Heart right ventricle (tissue), 16 donors: ENCODE measurements at regions of chr1 and their contacts with region 1.

Region 1: GRCh38 chr1:33367485-33368405 is 46.8 kb upstream of the A3GALT2 start:
- DNase-seq: peak; percentile 88 to 90
- ATAC-seq: peak; percentile 65 to 81 (median 74)
- H3K4me3 ChIP-seq: no peak overlapping the region
- H3K27ac ChIP-seq: peak overlapping the region in 9 of 10 donors; percentile 48 to 88 (median 80)
- H3K4me1 ChIP-seq: peaks cover 35 to 73% (median 54%) of the 10 kb centered on the region in 9 donors
- H3K27me3 ChIP-seq: no peaks in the 10 kb centered on the region
- CTCF ChIP-seq: peak; percentile 96 to 99 (median 97)

Region 2: DNA sequence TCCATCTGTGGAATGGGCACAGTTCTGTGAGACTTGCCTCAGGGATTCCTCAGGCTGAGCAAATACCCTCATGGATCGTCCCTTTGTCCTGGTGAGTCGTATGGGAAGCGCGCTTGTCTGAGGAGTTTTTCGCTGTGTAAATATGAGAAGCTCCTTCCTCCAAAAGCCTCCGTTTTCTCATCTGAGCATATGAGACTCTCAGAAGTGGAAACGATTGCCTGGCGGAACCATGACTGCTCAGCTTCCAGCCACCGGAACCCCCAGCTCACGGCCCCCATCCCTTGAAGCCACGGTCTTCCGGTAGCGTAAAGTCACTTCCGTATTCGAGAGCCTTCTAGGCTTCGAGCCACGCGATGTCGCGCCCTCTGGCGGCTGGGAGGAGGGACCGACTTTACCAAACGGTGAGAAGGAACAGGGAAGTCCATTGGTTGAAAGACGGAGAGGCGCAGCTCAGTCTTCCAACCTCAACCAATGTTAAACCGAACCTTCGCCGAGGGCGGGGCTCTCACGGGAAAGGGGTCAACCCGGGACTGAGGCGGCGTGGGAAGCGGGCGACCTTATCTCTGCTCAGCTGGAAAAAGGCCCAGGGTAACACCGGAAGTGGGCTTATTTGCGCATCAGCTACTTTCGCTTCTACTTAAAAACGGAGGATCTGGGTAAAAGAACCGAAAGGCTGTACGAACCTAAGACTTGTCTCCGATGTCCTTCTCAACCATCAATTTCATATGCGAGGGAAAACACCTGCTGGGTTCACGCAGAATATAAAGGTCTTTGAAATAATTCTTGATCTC is 240.5 kb before region 1 on chr1:
- intact Hi-C with region 1: loop called in 5 of 10 experiments (anchors 10 kb)
- DNase-seq: peak; percentile 98 to 99
- ATAC-seq: peak; percentile 98 to 99 (median 99)
- H3K4me3 ChIP-seq: peak overlapping the region; percentile 41 to 88 (median 74)
- H3K27ac ChIP-seq: peak overlapping the region; percentile 59 to 93 (median 86)
- H3K4me1 ChIP-seq: peaks cover 0 to 28% (median 22%) of the 10 kb centered on the region in 9 donors
- H3K27me3 ChIP-seq: no peaks in the 10 kb centered on the region
- CTCF ChIP-seq: peak; percentile 77 to 98 (median 96)

Region 3: DNA sequence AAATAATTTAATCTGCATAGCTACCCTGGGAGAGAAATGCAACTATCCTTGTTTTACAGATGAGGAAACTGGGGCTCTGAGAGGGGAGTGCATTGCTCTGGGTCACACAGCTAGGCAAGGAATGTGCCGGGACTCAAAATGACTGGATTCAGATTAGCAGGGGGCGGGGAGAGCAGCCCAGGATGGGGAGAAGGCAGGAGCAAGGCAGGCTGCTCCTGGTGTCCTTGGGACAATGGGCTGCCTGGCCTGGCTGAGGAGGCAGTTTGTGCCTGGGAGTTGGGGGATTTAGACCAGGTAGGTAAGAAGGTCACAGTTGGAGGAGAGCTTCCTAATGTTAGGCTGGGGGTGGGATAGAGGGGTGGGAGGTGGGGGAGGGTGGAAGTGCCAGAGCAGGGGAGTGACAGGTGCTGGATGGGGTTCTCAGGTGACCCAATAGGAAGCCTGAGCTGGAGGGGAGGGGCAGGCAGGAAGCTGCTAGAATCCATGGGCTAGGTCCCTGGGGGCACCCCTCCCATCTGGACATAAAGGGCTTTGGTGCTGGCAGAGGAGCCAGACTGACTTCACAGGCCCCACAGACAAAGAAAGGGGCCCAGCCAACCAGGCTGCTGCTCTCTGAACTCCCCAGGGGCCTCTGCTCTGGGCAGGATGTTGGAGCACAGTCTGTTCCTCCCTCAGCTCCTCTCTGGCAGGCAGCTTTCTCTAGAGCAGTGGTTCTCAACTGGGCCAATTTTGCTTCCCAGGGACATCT is 214.9 kb before region 1 on chr1:
- intact Hi-C with region 1: no loop called
- DNase-seq: peak; percentile 87 to 91
- ATAC-seq: peak; percentile 89 to 97 (median 96)
- H3K4me3 ChIP-seq: no peak overlapping the region
- H3K27ac ChIP-seq: peak overlapping the region in 9 of 10 donors; percentile 50 to 84 (median 75)
- H3K4me1 ChIP-seq: peaks cover 13 to 58% (median 51%) of the 10 kb centered on the region in 9 donors
- H3K27me3 ChIP-seq: no peaks in the 10 kb centered on the region
- CTCF ChIP-seq: no peak

Region 4: DNA sequence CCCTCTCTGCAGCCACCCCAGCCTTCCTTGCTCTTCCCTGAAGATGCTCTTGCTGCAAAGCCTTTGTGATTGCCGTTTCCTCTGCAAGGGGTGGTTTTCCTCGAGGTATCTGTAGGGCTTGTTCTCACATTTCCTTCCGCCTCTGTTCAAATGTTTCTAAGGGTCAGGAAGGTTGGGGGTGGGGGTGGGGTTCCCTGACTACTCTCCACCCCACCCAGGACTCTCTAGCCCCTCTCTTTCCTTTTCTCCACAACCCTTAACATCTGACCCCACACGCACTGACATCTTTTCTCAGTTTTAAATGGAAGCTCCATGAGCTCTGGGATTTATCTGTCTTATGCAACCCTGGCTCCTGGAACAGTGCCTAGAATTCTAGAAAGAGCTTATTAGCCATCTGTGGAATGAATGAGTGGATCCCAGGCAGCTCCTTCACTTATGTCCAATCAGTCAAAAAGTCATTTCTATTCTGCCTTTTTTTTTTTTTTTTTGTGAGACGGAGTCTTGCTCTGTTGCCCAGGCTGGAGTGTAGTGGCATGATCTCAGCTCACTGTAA is 138.7 kb before region 1 on chr1:
- intact Hi-C with region 1: loop called in 3 of 10 experiments (anchors 5 to 10 kb)
- DNase-seq: peak in 1 of 2 donors; percentile 80
- ATAC-seq: peak; percentile 73 to 94 (median 90)
- H3K4me3 ChIP-seq: no peak overlapping the region
- H3K27ac ChIP-seq: peak overlapping the region in 5 of 10 donors; percentile 16 to 69 (median 24)
- H3K4me1 ChIP-seq: peaks cover 0 to 33% (median 6%) of the 10 kb centered on the region in 9 donors
- H3K27me3 ChIP-seq: no peaks in the 10 kb centered on the region
- CTCF ChIP-seq: no peak

Region 5: DNA sequence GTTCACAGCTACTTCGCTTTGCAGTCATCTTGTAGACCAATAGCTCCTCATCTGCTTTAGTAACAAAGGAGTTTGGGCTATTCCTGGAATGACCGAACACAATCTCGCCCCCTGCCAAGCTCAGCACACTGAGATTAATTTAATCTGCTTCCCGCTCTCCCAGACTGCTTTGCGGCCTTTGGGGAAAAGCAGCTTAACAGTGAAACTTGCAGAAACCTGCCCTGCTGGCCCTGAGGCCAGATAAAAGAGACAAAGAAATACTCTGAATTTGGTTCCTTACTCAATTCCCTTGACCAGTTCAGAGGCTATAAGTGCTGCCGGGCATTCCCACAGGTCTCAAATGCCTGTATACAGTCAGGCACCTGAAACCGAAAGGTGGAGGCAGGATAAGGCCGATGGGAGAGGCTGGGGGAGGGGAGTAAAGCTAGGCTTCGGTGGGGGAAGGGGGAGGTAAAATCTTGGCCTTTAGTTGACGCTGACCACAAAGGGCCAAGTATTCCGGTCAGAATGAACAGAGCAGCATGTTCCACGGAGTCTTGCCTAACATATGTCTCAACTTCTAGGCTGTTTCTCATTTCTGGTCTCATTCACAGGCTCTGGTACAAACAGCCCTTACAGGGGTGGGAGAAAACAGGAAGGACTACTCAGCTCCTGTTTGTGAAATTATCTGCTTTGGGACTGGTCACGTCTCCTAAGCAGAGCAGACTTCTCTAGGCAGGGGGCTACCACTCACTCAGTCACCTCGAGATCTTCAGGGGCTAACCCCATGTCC is 29.1 kb before region 1 on chr1:
- intact Hi-C with region 1: loop called in 2 of 10 experiments (anchors 5 kb)
- DNase-seq: peak in 1 of 2 donors; percentile 72
- ATAC-seq: peak; percentile 37 to 76 (median 62)
- H3K4me3 ChIP-seq: peak overlapping the region in 7 of 10 donors; percentile 0 to 30 (median 15)
- H3K27ac ChIP-seq: peak overlapping the region; percentile 46 to 100 (median 92)
- H3K4me1 ChIP-seq: peaks cover 65 to 100% (median 99%) of the 10 kb centered on the region in 9 donors
- H3K27me3 ChIP-seq: no peaks in the 10 kb centered on the region
- CTCF ChIP-seq: peak in 1 of 9 donors; percentile 12

Region 6: DNA sequence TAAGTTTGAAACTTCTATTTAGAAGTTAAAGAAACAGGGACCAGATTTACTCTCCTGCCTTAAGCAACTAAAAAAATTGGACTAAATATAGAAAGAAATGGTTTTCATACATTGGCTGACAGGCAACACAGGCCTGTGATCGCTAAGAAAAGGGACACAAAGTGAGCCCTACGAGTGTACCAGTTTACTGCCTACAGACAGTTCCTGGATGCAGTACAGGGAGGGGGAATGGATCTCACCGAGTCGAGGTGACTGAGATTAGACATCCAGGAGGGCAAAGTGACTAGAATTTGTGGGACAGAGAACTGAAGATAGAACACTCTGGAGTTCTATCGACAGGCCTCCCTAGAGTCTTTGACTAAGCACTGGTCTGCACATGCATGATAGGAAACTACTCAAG is 47.1 kb after region 1 on chr1:
- intact Hi-C with region 1: no loop called
- DNase-seq: no peak
- ATAC-seq: peak in 4 of 8 donors; percentile 23 to 79 (median 40)
- H3K4me3 ChIP-seq: no peak overlapping the region
- H3K27ac ChIP-seq: peak overlapping the region in 4 of 10 donors; percentile 18 to 45 (median 32)
- H3K4me1 ChIP-seq: peaks cover 0 to 25% (median 9%) of the 10 kb centered on the region in 9 donors
- H3K27me3 ChIP-seq: no peaks in the 10 kb centered on the region
- CTCF ChIP-seq: no peak

Region 7: GRCh38 chr1:33455539-33456501 is 88.1 kb after region 1 on chr1:
- intact Hi-C with region 1: loop called in 8 of 10 experiments (anchors 5 to 10 kb)
- DNase-seq: peak in 1 of 2 donors; percentile 60
- ATAC-seq: peak; percentile 75 to 90 (median 84)
- H3K4me3 ChIP-seq: no peak overlapping the region
- H3K27ac ChIP-seq: peak overlapping the region in 7 of 10 donors; percentile 24 to 72 (median 54)
- H3K4me1 ChIP-seq: peaks cover 0 to 57% (median 25%) of the 10 kb centered on the region in 9 donors
- H3K27me3 ChIP-seq: no peaks in the 10 kb centered on the region
- CTCF ChIP-seq: peak; percentile 21 to 74 (median 65)

Region 8: GRCh38 chr1:33472349-33472980 is 104.7 kb after region 1 on chr1 and contains the start of gene ZSCAN20:
- intact Hi-C with region 1: loop called in 6 of 10 experiments (anchors 2 to 10 kb)
- DNase-seq: peak; percentile 98 to 99
- ATAC-seq: peak; percentile 89 to 97 (median 94)
- H3K4me3 ChIP-seq: peak within 1 kb of the TSS; percentile 19 to 77 (median 64)
- H3K27ac ChIP-seq: peak within 1 kb of the TSS; percentile 59 to 92 (median 84)
- H3K4me1 ChIP-seq: peaks cover 3 to 65% (median 41%) of the 10 kb centered on the region in 9 donors
- H3K27me3 ChIP-seq: no peaks in the 10 kb centered on the region
- CTCF ChIP-seq: no peak
- total RNA-seq, gene ZSCAN20: 3.4 to 9.3 (median 5.8) TPM